Activated CD4-positive, alpha-beta memory T cell treated with anti-CD3 and anti-CD28 coated beads, Interleukin-2, amount 10 ng/mL, durations not matched to agents 7 days and 5 days (primary cell): ENCODE measurements at regions of chr11 and their contacts with region 1.

Region 1: DNA sequence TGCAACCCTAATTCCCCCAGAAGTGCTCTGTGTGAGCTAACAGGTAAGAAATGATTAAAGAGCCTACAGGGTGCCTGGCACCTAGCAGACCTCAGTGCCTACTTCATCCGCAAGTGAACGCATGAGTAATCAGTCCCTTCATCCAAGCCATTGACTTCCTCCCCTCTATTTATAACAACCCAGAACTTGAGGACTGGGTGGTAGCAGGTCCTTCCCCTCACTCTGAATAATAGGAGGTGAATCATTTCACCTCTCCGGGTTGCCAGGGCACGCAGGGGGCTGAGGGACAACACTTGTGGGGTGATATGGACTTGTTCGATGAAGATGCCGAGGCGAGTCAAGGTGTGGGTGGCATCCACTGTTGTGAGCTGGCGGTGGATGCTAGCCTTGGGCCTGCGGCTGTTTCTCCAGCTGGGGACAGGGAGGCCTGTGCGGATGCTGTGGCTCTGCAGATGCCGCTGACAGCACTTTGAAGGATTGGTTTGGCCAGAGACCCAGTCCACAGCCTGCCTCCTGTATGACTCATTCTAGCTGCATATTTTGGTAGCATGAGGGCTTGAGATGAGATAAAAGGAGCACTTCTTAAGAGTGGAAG is 11.7 kb upstream of the SORL1-AS1 start:
- DNase-seq: peak; percentile 86
- H3K4me3 Mint-ChIP-seq: peak overlapping the region; percentile 38
- H3K27ac Mint-ChIP-seq: peak overlapping the region; percentile 99
- H3K4me1 Mint-ChIP-seq: peaks cover 98% of the 10 kb centered on the region
- H3K27me3 Mint-ChIP-seq: no peaks in the 10 kb centered on the region

Region 2: GRCh38 chr11:121417055-121417551 is 47.3 kb before region 1 on chr11:
- CTCF ChIA-PET with region 1: no interaction called
- POLR2A ChIA-PET with region 1: interaction called, 11 read pairs
- DNase-seq: peak; percentile 75
- H3K4me3 Mint-ChIP-seq: no peak overlapping the region
- H3K27ac Mint-ChIP-seq: peak overlapping the region; percentile 84
- H3K4me1 Mint-ChIP-seq: peaks cover 68% of the 10 kb centered on the region
- H3K27me3 Mint-ChIP-seq: no peaks in the 10 kb centered on the region

Region 3: GRCh38 chr11:121482231-121483129 is 18.0 kb after region 1 on chr11:
- CTCF ChIA-PET with region 1: interaction called, 6 read pairs
- POLR2A ChIA-PET with region 1: interaction called, 96 read pairs
- DNase-seq: peak; percentile 77
- H3K4me3 Mint-ChIP-seq: peak overlapping the region; percentile 77
- H3K27ac Mint-ChIP-seq: peak overlapping the region; percentile 99
- H3K4me1 Mint-ChIP-seq: peaks cover 56% of the 10 kb centered on the region
- H3K27me3 Mint-ChIP-seq: no peaks in the 10 kb centered on the region